Heart left ventricle (tissue), 16 donors: ENCODE measurements at regions of chr16 and their contacts with region 1.

Region 1: GRCh38 chr16:62225697-62226280 is 189.6 kb upstream of the CDH8 start:
- DNase-seq: peak; percentile 27 to 75 (median 63)
- ATAC-seq: peak in 3 of 4 donors; percentile 74 to 90 (median 82)
- H3K4me3 ChIP-seq: peak overlapping the region in 5 of 12 donors; percentile 14 to 31 (median 16)
- H3K27ac ChIP-seq: no peak overlapping the region
- H3K4me1 ChIP-seq: no peaks in the 10 kb centered on the region
- H3K27me3 ChIP-seq: no peaks in the 10 kb centered on the region
- CTCF ChIP-seq: peak; percentile 14 to 54 (median 37)
- POLR2A ChIP-seq: no peak

Region 2: DNA sequence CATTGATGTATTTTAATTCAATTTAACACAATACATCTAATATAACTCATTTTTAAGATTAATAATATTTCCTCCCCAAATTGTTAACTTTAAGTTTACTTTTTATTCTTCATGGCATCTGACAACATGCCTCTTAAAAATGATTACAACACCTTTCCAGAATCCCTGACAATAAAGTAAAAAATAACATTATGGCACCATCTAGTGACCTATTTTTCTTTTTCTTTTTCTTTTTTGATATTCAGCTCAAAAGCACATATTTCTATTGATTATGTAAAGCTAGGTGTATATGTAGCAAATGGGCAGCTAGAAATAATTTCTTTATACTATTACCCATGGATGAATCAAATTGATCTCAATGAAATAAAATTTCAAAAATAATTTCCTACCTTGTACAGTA is 644.8 kb after region 1 on chr16:
- intact Hi-C with region 1: loop called in 1 of 10 experiments (anchors 10 kb)
- DNase-seq: no peak
- ATAC-seq: no peak
- H3K4me3 ChIP-seq: no peak overlapping the region
- H3K27ac ChIP-seq: no peak overlapping the region
- H3K4me1 ChIP-seq: no peaks in the 10 kb centered on the region
- H3K27me3 ChIP-seq: no peaks in the 10 kb centered on the region
- CTCF ChIP-seq: peak in 2 of 12 donors; percentile 14 to 16
- POLR2A ChIP-seq: no peak

Region 3: GRCh38 chr16:63283721-63284120 is 1057.9 kb after region 1 on chr16:
- intact Hi-C with region 1: loop called in 2 of 10 experiments (anchors 5 to 10 kb)
- DNase-seq: no peak
- ATAC-seq: no peak
- H3K4me3 ChIP-seq: no peak overlapping the region
- H3K27ac ChIP-seq: no peak overlapping the region
- H3K4me1 ChIP-seq: peaks cover 0 to 7% (median 0%) of the 10 kb centered on the region in 12 donors
- H3K27me3 ChIP-seq: no peaks in the 10 kb centered on the region
- CTCF ChIP-seq: no peak
- POLR2A ChIP-seq: no peak

Region 4: GRCh38 chr16:63289852-63290460 is 1064.2 kb after region 1 on chr16:
- intact Hi-C with region 1: loop called in 1 of 10 experiments (anchors 10 kb)
- DNase-seq: peak in 4 of 5 donors; percentile 8 to 48 (median 34)
- ATAC-seq: peak; percentile 66 to 88 (median 84)
- H3K4me3 ChIP-seq: no peak overlapping the region
- H3K27ac ChIP-seq: no peak overlapping the region
- H3K4me1 ChIP-seq: peaks cover 0 to 17% (median 0%) of the 10 kb centered on the region in 12 donors
- H3K27me3 ChIP-seq: no peaks in the 10 kb centered on the region
- CTCF ChIP-seq: peak; percentile 45 to 72 (median 66)
- POLR2A ChIP-seq: no peak